ENCODE measurements at regions of chr3 and their contacts with region 1.

Region 1: GRCh38 chr3:4826237-4827100 is 152.8 kb upstream of the BHLHE40 start:
- DNase-seq: no peak
- H3K4me3 ChIP-seq: no peak overlapping the region
- H3K27ac ChIP-seq: no peak overlapping the region
- H3K4me1 ChIP-seq: peaks cover 26 to 70% (median 57%) of the 10 kb centered on the region in 4 experiments
- H3K27me3 ChIP-seq: no peaks in the 10 kb centered on the region

Region 2: GRCh38 chr3:4814305-4814903 is 12.1 kb before region 1 on chr3:
- CTCF ChIA-PET with region 1: interaction called, 29 read pairs
- POLR2A ChIA-PET with region 1: interaction called, 3 read pairs
- DNase-seq: peak in 2 of 3 donors; percentile 79 to 85
- H3K4me3 ChIP-seq: no peak overlapping the region
- H3K27ac ChIP-seq: peak overlapping the region in 1 of 2 experiments; percentile 68
- H3K4me1 ChIP-seq: peaks cover 0 to 7% (median 0%) of the 10 kb centered on the region in 4 experiments
- H3K27me3 ChIP-seq: no peaks in the 10 kb centered on the region

Region 3: DNA sequence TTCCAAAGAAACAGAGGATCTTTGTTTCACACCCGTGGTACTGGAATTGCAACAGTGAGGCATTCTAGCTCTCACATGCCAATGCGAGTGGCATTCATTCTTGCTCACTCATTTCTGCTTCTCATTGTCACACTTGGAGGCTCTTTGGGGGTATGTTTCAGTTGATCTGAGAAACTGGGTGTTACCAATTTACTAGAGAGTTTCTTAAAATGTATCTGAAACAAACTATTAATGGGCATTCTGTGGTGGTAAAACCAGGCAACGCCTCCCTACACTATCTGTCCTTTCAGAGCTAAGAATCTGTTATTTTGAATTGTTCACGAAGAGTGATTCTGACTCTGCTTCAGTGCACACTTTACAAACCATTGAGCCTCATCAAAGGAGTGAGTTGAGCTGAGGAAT is 12.2 kb after region 1 on chr3:
- CTCF ChIA-PET with region 1: interaction called, 11 read pairs
- POLR2A ChIA-PET with region 1: interaction called, 3 read pairs
- DNase-seq: no peak
- H3K4me3 ChIP-seq: no peak overlapping the region
- H3K27ac ChIP-seq: no peak overlapping the region
- H3K4me1 ChIP-seq: peaks cover 18 to 45% (median 32%) of the 10 kb centered on the region in 4 experiments
- H3K27me3 ChIP-seq: no peaks in the 10 kb centered on the region

Measured in common myeloid progenitor, CD34-positive (primary cell).